Heart left ventricle (tissue), 16 donors: ENCODE measurements at regions of chr19 and their contacts with region 1.

Region 1: GRCh38 chr19:4732680-4733114 is 9.1 kb upstream of the DPP9 start:
- DNase-seq: no peak
- ATAC-seq: peak in 3 of 4 donors; percentile 84 to 92 (median 88)
- H3K4me3 ChIP-seq: no peak overlapping the region
- H3K27ac ChIP-seq: no peak overlapping the region
- H3K4me1 ChIP-seq: peaks cover 0 to 7% (median 0%) of the 10 kb centered on the region in 12 donors
- H3K27me3 ChIP-seq: no peaks in the 10 kb centered on the region
- CTCF ChIP-seq: peak; percentile 65 to 84 (median 76)
- POLR2A ChIP-seq: no peak

Region 2: DNA sequence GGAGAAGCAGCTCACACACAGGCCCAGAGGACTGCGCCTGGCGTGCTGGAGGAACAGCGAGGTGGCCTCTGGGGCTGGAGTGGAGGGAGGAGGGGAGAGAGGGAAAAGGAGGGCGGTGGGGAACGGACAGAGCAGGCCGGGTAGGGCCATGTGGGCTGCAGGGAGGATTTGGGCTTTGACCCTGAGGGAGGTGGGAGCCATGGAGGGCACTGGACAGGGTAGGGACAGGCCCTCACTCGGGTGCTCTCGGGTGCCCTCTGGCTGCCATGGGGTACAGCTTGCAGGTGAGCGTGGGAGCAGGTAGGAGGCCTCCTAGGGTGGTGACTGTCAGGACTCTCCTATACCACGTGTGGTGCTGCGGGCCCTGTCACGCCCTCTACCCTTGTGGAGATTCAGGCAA is 237.2 kb before region 1 on chr19:
- intact Hi-C with region 1: no loop called
- DNase-seq: no peak
- ATAC-seq: peak in 2 of 4 donors; percentile 5 to 24
- H3K4me3 ChIP-seq: no peak overlapping the region
- H3K27ac ChIP-seq: no peak overlapping the region
- H3K4me1 ChIP-seq: no peaks in the 10 kb centered on the region
- H3K27me3 ChIP-seq: no peaks in the 10 kb centered on the region
- CTCF ChIP-seq: no peak
- POLR2A ChIP-seq: no peak

Region 3: GRCh38 chr19:4576016-4576933 is 156.4 kb before region 1 on chr19:
- intact Hi-C with region 1: no loop called
- DNase-seq: peak; percentile 59 to 86 (median 69)
- ATAC-seq: peak; percentile 21 to 55 (median 46)
- H3K4me3 ChIP-seq: no peak overlapping the region
- H3K27ac ChIP-seq: peak overlapping the region in 11 of 12 donors; percentile 60 to 90 (median 85)
- H3K4me1 ChIP-seq: peaks cover 0 to 31% (median 12%) of the 10 kb centered on the region in 12 donors
- H3K27me3 ChIP-seq: peaks cover 6 to 55% (median 21%) of the 10 kb centered on the region in 9 donors
- CTCF ChIP-seq: peak; percentile 50 to 73 (median 66)
- POLR2A ChIP-seq: no peak

Region 4: GRCh38 chr19:4759388-4760284 is 26.9 kb after region 1 on chr19:
- intact Hi-C with region 1: no loop called
- DNase-seq: peak; percentile 89 to 94 (median 93)
- ATAC-seq: peak; percentile 88 to 99 (median 99)
- H3K4me3 ChIP-seq: peak overlapping the region in 10 of 12 donors; percentile 21 to 51 (median 39)
- H3K27ac ChIP-seq: no peak overlapping the region
- H3K4me1 ChIP-seq: peaks cover 0 to 14% (median 7%) of the 10 kb centered on the region in 12 donors
- H3K27me3 ChIP-seq: peaks cover 0 to 27% (median 2%) of the 10 kb centered on the region in 9 donors
- CTCF ChIP-seq: no peak
- POLR2A ChIP-seq: no peak

Region 5: DNA sequence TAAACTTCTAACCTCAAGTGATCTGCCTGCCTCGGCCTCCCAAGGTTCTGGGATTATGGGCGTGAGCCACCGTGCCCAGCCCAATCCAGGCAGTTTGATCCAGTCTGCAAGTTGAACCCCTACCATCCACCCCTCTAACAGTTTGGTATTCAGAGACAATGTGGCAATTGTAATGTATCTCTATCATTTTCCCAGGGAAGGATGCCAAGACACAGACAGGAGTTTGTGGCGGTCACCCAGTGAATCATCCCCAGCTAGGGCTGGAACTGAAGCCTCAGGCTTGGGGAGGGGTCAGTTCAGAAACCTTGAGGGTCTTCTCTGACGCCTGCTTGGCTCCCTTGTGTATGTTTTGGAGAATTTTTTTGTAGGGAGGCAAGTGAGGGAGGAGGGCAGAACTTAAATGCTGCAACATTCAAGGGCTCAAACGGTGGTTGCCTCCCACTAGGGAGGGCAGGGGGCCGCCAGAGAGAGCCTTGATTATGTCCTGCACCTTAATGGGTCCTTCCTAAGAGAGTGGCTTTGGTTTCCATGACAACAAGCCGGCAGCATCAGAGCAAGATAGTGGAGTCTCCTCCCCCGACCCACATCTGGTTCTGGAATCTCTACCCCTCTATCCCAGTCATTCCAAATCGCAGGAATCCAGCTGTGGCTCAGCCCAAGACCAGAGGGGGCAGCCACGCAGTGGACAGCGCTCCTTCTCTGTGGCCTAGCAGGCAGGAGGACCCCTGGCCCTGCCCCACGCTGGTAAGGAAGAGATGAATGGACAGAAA is 43.9 kb after region 1 on chr19:
- intact Hi-C with region 1: no loop called
- DNase-seq: no peak
- ATAC-seq: no peak
- H3K4me3 ChIP-seq: no peak overlapping the region
- H3K27ac ChIP-seq: no peak overlapping the region
- H3K4me1 ChIP-seq: no peaks in the 10 kb centered on the region
- H3K27me3 ChIP-seq: no peaks in the 10 kb centered on the region
- CTCF ChIP-seq: no peak
- POLR2A ChIP-seq: no peak

Region 6: GRCh38 chr19:4791170-4792018 is 58.7 kb after region 1 on chr19 and contains the start of gene FEM1A:
- intact Hi-C with region 1: loop called (anchors 1 to 5 kb)
- DNase-seq: peak; percentile 99 to 100 (median 100)
- ATAC-seq: peak; percentile 99
- H3K4me3 ChIP-seq: peak within 1 kb of the TSS; percentile 74 to 98 (median 94)
- H3K27ac ChIP-seq: peak within 1 kb of the TSS; percentile 90 to 98 (median 95)
- H3K4me1 ChIP-seq: peaks cover 0 to 49% (median 35%) of the 10 kb centered on the region in 12 donors
- H3K27me3 ChIP-seq: no peaks in the 10 kb centered on the region
- CTCF ChIP-seq: peak; percentile 95 to 100 (median 98)
- POLR2A ChIP-seq: peak; percentile 7 to 71
- total RNA-seq, gene FEM1A: 30.7 to 94.0 (median 41.8) TPM